ENCODE measurements at regions of chr10 and their contacts with region 1.

Region 1: DNA sequence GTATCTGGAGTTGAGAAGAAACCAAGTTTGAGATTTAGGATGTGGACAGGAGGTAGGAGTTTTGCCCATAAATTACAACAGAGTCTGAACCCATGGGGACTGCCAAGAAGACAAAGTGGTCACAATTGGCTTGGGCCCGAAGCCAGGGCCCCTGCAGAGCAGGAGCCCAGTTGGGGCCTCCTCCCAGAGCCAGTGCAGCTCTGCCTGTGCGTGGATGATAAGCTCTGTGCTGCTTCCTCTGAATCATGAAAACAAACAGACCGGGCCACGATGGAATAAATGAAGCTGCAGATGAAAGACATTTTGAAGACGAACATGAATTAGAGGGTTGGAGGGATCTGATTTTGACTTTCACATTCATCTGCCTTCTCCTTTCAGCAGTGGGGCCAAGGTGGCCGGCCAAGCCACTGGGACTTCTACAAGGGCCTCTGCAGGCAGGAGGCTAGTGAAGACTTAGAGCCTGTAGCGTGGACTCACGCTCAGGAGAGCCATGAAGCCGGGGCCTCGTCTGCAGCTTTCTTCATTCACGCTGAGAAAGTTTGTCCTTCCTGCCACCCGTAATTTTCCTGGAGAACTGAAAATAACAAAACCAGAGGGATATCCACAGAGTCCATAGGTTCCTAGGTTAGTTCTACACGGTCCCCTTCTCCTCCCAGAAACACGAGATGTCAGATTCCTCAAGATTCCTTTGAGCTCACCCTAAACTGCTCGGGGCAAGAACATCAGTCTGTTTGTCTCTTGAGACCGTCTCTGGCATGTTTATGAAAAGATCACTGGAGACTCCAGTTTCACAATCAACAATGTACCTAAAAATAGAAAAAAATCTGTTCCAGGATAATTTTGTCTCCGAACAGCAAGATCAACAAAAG is 156.7 kb upstream of the LYZL1 start:
- DNase-seq: no peak
- H3K27ac ChIP-seq: no peak overlapping the region
- CTCF ChIP-seq: no peak

Region 2: DNA sequence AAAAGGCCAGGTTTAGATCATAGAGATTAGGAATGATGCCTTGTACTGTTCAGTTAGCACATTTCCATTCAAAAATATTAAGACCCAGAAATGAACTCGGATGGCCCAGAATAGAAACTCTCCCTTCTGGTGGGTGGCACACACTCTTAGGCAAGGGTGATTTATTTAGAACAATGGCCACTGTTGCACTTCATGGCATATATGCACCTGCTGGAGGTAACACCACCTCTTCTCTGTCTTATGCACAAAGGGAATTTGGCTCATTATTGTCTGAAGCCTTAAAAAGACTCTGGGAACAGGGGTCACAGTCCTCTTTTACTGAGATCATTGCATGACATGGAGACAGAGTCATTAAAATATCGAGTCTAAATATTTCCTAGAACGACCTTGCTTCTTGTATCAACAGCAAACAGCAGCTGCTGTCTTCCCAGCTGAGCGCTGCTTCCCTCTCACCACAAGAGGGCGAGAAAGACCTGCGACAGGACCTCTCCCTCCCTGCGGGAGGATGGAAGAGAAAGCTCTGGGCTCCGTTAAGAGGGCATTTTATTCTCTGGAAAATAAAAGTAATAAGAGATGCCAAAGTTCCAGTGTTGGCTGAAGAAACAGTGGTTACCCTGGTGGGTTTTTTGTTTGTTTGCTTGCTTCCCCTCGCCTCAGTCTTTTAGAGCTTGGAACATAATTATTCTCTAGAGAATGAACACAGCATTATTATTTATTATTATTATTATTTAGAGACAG is 468.4 kb before region 1 on chr10:
- CTCF ChIA-PET with region 1: interaction called, 26 read pairs
- POLR2A ChIA-PET with region 1: no interaction called
- DNase-seq: peak; percentile 77
- H3K27ac ChIP-seq: no peak overlapping the region
- CTCF ChIP-seq: peak; percentile 95

Region 3: GRCh38 chr10:28875549-28876081 is 256.6 kb before region 1 on chr10:
- CTCF ChIA-PET with region 1: no interaction called
- POLR2A ChIA-PET with region 1: no interaction called
- DNase-seq: no peak
- H3K27ac ChIP-seq: no peak overlapping the region
- CTCF ChIP-seq: no peak

Region 4: DNA sequence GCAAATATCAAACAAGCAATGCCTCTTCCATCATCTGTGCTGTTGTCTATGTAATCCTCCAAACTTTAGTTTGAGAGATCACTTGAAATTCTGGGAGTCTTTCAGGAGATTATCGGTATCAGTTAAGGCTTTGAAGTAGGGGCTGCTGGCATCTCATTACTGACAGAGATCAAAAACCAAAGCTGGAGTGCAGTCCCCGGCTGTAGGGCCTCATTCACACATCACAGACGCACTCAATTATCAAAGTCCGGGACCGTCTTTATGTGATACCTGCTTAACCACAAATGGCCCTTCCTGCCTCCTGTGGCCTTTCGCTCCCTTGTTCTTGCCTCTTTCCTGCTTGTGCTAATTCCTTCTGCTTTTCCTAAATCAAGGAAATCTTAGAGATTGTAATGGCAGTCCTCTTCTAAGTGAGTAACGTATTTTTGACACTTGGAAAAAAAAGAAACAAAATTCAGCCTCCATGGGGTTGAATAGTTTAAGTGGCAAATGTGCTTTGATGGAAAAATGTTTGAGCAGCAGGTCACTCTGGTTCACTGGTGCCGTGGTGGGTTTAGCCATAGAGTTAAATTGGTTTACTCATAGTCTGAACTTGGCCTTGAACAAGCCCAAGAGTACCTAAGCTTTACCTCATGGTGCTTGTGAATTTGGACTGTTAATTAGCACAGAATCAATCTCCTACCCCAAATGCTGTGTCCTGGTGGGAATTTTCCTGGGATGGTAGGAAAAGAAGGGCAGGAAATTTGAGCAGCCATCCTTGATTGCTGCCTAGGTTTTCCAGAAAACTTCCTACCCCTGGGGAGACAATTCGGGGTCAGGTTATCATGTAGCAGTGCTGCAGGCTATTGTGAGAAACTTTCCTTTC is 22.2 kb before region 1 on chr10:
- CTCF ChIA-PET with region 1: no interaction called
- POLR2A ChIA-PET with region 1: no interaction called
- DNase-seq: no peak
- H3K27ac ChIP-seq: no peak overlapping the region
- CTCF ChIP-seq: no peak

Measured in RWPE1 (cell line).